ENCODE measurements at regions of chr2 and their contacts with region 1.

Region 1: GRCh38 chr2:17573085-17573803 is 32.7 kb downstream of the VSNL1 start:
- DNase-seq: no peak
- H3K4me3 Mint-ChIP-seq: no peak overlapping the region
- H3K27ac Mint-ChIP-seq: no peak overlapping the region
- H3K4me1 Mint-ChIP-seq: no peaks in the 10 kb centered on the region
- H3K27me3 Mint-ChIP-seq: peaks cover 41% of the 10 kb centered on the region
- CTCF ChIP-seq: no peak

Region 2: DNA sequence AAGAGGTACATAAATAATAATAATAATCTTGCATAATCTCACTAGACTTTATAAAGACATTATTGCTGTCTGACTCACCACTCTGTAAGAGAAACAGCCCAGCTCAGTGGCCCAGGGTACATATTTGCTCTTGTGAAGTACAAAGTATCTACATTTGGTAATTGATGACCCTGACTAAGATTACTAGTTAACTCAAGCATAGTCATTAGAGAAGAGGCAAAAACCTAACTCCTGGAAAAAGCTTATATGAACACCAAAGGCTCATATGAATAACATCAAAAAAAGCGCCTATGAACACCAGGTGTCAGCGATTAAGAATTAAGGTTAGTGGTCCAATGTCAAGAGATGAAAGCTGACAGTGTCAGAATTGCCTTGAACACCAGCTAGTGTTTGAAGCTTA is 93.4 kb before region 1 on chr2:
- CTCF ChIA-PET with region 1: no interaction called
- intact Hi-C with region 1: loop called (anchors 5 kb)
- DNase-seq: no peak
- H3K4me3 Mint-ChIP-seq: no peak overlapping the region
- H3K27ac Mint-ChIP-seq: no peak overlapping the region
- H3K4me1 Mint-ChIP-seq: peaks cover 8% of the 10 kb centered on the region
- H3K27me3 Mint-ChIP-seq: no peaks in the 10 kb centered on the region
- CTCF ChIP-seq: no peak